ENCODE measurements at regions of chr3 and their contacts with region 1.

Region 1: GRCh38 chr3:105366326-105367062 is at the start of gene ALCAM:
- DNase-seq: peak; percentile 99
- ATAC-seq: peak; percentile 72
- H3K4me3 ChIP-seq: peak within 1 kb of the TSS; percentile 83
- H3K27ac ChIP-seq: peak within 1 kb of the TSS; percentile 96
- H3K4me1 ChIP-seq: peaks cover 49% of the 10 kb centered on the region
- H3K27me3 ChIP-seq: no peaks in the 10 kb centered on the region
- CTCF ChIP-seq: peak; percentile 76
- total RNA-seq, gene ALCAM: 168 and 169 TPM in 2 replicates

Region 2: DNA sequence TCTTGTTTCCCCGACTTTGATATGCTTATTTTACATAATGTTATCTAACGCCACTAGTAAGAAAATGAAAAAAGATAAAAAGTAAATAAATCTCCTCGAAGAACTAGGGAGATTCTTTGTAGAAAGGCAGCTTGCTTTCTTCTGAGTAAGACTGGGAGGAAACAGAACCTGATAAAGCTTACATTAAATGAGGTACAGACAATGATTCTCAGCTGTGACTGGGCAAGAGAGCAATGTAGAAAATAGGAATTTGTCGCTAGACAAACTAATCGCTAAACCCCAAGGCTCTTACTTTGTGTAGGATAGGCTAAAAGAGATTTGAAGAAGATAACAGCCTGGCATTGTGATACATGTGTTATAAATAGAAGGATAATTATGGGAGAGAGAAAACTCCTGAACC is 918.8 kb before region 1 on chr3:
- CTCF ChIA-PET with region 1: no interaction called
- POLR2A ChIA-PET with region 1: no interaction called
- intact Hi-C with region 1: loop called (anchors 1 kb)
- DNase-seq: no peak
- ATAC-seq: peak; percentile 13; the same call in 1 of the 2 replicates
- H3K4me3 ChIP-seq: no peak overlapping the region
- H3K27ac ChIP-seq: peak overlapping the region; percentile 93; the same call in 1 of the 2 replicates
- H3K4me1 ChIP-seq: peaks cover 30% of the 10 kb centered on the region
- H3K27me3 ChIP-seq: no peaks in the 10 kb centered on the region
- CTCF ChIP-seq: no peak

Region 3: GRCh38 chr3:104750581-104750980 is 615.9 kb before region 1 on chr3:
- CTCF ChIA-PET with region 1: no interaction called
- POLR2A ChIA-PET with region 1: no interaction called
- intact Hi-C with region 1: loop called (anchors 10 kb)
- DNase-seq: no peak
- ATAC-seq: no peak
- H3K4me3 ChIP-seq: no peak overlapping the region
- H3K27ac ChIP-seq: no peak overlapping the region
- H3K4me1 ChIP-seq: no peaks in the 10 kb centered on the region
- H3K27me3 ChIP-seq: no peaks in the 10 kb centered on the region
- CTCF ChIP-seq: no peak

Region 4: DNA sequence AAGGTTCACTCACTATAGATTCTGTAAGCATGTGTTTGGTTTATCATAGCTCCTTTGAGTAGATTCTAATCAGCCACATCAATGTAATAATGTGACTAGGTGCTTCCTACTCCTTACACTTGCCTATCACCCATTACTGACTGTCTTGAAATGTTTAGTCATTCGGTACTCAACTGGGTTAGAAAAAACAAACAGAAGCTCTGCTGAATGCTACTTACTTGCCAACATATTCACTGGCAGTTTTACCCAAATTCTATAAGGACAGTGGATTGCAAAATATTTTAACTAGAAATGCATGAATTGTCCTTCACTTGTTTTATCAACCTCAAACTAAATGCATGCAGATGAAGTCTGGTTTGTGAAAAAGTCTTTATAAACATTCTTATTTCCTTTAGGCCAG is 351.9 kb before region 1 on chr3:
- CTCF ChIA-PET with region 1: no interaction called
- POLR2A ChIA-PET with region 1: no interaction called
- intact Hi-C with region 1: loop called (anchors 2 kb)
- DNase-seq: peak; percentile 69
- ATAC-seq: peak; percentile 98
- H3K4me3 ChIP-seq: no peak overlapping the region
- H3K27ac ChIP-seq: no peak overlapping the region
- H3K4me1 ChIP-seq: peaks cover 18% of the 10 kb centered on the region
- H3K27me3 ChIP-seq: no peaks in the 10 kb centered on the region
- CTCF ChIP-seq: no peak

Region 5: DNA sequence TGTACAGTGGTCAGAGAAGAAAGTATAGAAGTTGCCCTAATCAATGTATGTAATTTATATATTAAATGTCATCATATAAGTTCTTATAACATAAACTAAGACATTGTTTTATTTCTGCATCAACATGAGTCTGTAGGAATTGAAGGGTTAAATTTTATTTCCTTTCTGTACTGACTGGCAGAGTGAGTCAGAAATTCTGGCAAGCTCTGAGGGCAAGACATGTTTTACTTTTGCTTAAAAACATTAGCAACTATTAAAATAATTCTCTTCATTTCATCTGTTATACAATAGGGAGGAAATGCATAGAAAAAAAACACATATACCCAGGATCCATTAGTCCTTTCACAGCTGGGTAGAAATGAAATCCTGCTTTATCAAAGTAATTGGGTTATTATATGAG is 171.2 kb before region 1 on chr3:
- CTCF ChIA-PET with region 1: no interaction called
- POLR2A ChIA-PET with region 1: no interaction called
- intact Hi-C with region 1: no loop called
- DNase-seq: peak; percentile 50
- ATAC-seq: peak; percentile 84; the same call in 1 of the 2 replicates
- H3K4me3 ChIP-seq: no peak overlapping the region
- H3K27ac ChIP-seq: no peak overlapping the region
- H3K4me1 ChIP-seq: peaks cover 10% of the 10 kb centered on the region; the same call in 1 of the 2 replicates
- H3K27me3 ChIP-seq: no peaks in the 10 kb centered on the region
- CTCF ChIP-seq: no peak

Region 6: DNA sequence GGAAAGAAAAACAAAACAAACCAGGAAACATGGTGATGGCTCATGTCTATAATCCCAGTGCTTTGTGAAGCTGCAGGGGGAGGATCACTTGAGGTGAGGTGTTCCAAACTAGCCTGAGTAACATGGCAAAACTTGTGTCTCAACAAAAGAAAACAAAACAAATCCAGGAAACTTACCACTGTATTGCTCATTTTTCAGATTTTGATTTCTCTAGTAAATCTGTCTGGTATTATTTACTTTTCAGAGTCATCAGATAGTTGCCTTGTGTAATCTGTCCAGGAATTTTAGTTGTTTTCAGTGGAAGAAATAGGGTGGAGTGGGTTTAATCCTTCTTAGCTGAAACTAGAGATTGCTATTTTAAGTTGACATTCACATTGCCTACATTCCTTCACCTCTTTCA is 91.5 kb before region 1 on chr3:
- CTCF ChIA-PET with region 1: no interaction called
- POLR2A ChIA-PET with region 1: no interaction called
- intact Hi-C with region 1: loop called (anchors 1 kb)
- DNase-seq: peak; percentile 95
- ATAC-seq: peak; percentile 94
- H3K4me3 ChIP-seq: peak overlapping the region; percentile 21; the same call in 1 of the 2 replicates
- H3K27ac ChIP-seq: peak overlapping the region; percentile 93
- H3K4me1 ChIP-seq: peaks cover 39% of the 10 kb centered on the region
- H3K27me3 ChIP-seq: no peaks in the 10 kb centered on the region
- CTCF ChIP-seq: no peak

Region 7: DNA sequence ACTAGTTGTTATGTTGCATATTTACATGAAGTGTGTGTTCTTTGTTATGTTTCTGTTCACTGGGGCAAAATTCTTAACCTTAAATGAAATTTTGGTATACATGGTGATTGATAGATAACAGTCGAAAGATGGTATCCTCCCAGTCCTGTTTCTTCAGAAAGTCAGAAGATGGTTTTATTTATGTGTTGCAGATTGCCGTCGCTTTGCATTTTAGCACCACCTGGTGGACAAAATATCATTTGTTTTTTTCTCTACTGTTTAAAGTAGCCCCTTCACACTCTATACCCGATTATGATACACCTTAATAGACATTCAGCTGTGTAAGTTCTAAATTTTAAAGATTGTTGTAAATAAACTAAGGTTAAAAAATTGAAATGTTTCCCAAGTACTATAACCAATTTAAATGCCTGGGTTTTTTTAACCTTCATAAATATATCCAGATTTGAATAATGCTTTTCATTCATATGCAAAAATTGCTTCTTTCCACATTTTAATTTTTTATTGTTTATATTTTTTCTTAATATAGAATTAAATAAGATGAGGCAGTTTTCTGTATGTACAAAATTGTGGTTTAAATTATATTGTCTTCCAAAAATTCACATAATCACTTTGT is 152.4 kb after region 1 on chr3:
- CTCF ChIA-PET with region 1: interaction called, 4 read pairs
- POLR2A ChIA-PET with region 1: interaction called, 20 read pairs
- intact Hi-C with region 1: loop called (anchors 1 kb)
- DNase-seq: peak; percentile 90
- ATAC-seq: peak; percentile 53
- H3K4me3 ChIP-seq: no peak overlapping the region
- H3K27ac ChIP-seq: no peak overlapping the region
- H3K4me1 ChIP-seq: peaks cover 45% of the 10 kb centered on the region
- H3K27me3 ChIP-seq: no peaks in the 10 kb centered on the region
- CTCF ChIP-seq: peak; percentile 86

Measured in PC-3 (cell line).